Activated CD4-positive, alpha-beta T cell treated with anti-CD3 and anti-CD28 coated beads for 36 hours (primary cell): ENCODE measurements at regions of chr6 and their contacts with region 1.

Region 1: DNA sequence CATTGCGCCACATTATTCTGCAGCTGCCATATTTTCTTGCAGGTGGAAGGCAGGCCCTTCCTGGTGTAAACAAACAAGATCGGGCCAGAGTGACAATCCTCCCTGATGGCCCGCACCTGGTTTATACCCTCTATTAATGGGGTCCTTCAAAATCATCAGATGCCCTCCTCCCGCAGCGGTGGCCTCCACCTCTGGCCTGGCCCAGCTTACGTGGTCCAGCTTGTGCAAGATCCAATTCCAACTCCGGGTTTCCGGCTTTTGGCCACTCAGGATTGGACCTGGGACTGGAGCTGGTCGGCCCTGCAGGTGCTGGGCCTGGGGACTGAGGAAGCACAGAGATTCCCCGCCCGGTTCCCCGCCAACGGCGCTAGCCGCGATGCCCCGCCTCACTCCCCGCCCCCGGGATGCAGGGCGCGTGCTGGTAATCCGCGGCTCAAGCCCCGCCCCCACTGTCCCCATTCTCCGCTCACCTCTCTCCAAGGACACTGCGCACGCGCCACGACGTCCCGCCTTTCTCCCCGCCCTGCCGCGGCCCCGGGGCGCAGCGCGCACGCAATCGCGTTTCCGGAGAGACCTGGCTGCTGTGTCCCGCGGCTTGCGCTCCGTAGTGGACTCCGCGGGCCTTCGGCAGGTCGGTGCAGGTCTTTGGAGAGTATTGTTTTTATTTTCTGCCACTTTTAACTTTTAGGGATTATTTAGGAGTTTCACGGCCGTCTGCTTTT is at the start of gene TMEM14B:
- DNase-seq: peak; percentile 100
- ATAC-seq: peak; percentile 98
- H3K4me3 Mint-ChIP-seq: peak within 1 kb of the TSS; percentile 95
- H3K27ac Mint-ChIP-seq: peak within 1 kb of the TSS; percentile 95
- H3K4me1 Mint-ChIP-seq: peaks cover 40% of the 10 kb centered on the region
- H3K27me3 Mint-ChIP-seq: no peaks in the 10 kb centered on the region
- total RNA-seq, gene TMEM14B: 77.2 to 99.3 TPM

Region 2: GRCh38 chr6:10404107-10404798 is 343.2 kb before region 1 on chr6:
- CTCF ChIA-PET with region 1: no interaction called
- POLR2A ChIA-PET with region 1: no interaction called
- intact Hi-C with region 1: loop called (anchors 1 to 2 kb)
- DNase-seq: peak; percentile 95
- ATAC-seq: peak; percentile 95
- H3K4me3 Mint-ChIP-seq: peak overlapping the region; percentile 71
- H3K27ac Mint-ChIP-seq: peak overlapping the region; percentile 84
- H3K4me1 Mint-ChIP-seq: peaks cover 7% of the 10 kb centered on the region
- H3K27me3 Mint-ChIP-seq: peaks cover 60% of the 10 kb centered on the region

Region 3: GRCh38 chr6:10510592-10511367 is 236.6 kb before region 1 on chr6:
- CTCF ChIA-PET with region 1: interaction called, 3 read pairs
- POLR2A ChIA-PET with region 1: no interaction called
- intact Hi-C with region 1: loop called in 1 of 2 experiments (anchors 2 kb)
- DNase-seq: peak; percentile 73
- ATAC-seq: peak; percentile 99
- H3K4me3 Mint-ChIP-seq: no peak overlapping the region
- H3K27ac Mint-ChIP-seq: no peak overlapping the region
- H3K4me1 Mint-ChIP-seq: peaks cover 5% of the 10 kb centered on the region
- H3K27me3 Mint-ChIP-seq: peaks cover 2% of the 10 kb centered on the region

Region 4: GRCh38 chr6:10528170-10528981 is 219.0 kb before region 1 on chr6:
- CTCF ChIA-PET with region 1: interaction called, 3 read pairs
- POLR2A ChIA-PET with region 1: no interaction called
- intact Hi-C with region 1: loop called in 1 of 2 experiments (anchors 1 kb)
- DNase-seq: peak; percentile 48
- ATAC-seq: peak; percentile 85
- H3K4me3 Mint-ChIP-seq: peak overlapping the region; percentile 76
- H3K27ac Mint-ChIP-seq: peak overlapping the region; percentile 86
- H3K4me1 Mint-ChIP-seq: peaks cover 58% of the 10 kb centered on the region
- H3K27me3 Mint-ChIP-seq: peaks cover 3% of the 10 kb centered on the region

Region 5: GRCh38 chr6:10722820-10723566 is 24.4 kb before region 1 on chr6 and contains the start of gene TMEM14C:
- CTCF ChIA-PET with region 1: interaction called, 9 read pairs
- POLR2A ChIA-PET with region 1: interaction called, 19 read pairs
- intact Hi-C with region 1: loop called (anchors 1 kb)
- DNase-seq: peak; percentile 94
- ATAC-seq: peak; percentile 95
- H3K4me3 Mint-ChIP-seq: peak within 1 kb of the TSS; percentile 92
- H3K27ac Mint-ChIP-seq: peak within 1 kb of the TSS; percentile 93
- H3K4me1 Mint-ChIP-seq: peaks cover 49% of the 10 kb centered on the region
- H3K27me3 Mint-ChIP-seq: no peaks in the 10 kb centered on the region
- total RNA-seq, gene TMEM14C: 67.6 to 81.7 TPM

Region 6: DNA sequence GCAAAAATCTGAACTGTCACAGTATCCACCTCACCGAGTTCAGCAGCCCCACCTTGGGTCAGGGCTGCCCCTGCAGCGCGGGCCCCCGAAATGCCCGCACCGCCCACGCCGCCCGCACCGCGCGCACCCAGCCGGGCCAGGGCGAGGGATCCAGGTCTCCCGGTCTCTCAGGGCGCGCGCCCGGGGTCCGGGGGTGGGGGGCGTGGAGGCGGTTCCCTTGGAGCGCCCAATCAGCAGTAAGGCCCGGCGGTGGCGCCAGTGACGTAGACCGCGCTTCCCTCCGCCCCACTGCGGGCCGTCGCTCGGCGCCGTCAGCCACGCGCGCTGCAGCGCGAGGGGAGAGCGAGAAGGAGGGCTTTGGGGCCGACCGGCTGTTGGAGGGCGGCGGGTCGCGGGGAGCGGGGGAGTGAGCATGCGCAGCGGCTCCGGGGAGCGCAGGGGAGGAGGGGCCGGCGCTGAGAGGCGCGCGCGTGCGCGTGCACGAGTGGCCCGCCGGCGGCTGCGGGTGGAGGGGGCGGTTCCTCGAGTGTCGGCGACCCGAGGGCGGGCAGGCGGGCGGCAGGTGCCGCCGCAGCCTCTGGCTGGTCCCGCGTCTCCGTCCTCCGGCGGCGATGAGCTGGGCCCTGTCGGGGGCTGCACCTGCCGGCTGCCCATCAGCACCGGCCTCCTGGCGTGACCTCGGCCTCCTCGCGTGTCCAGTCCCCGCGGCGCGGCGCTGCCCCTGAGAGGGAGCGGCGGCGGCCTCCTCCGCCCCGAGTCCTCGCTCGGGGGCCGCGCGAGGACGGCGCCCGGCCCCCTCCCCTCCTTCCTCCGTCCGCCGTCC is 790.0 kb after region 1 on chr6 and contains the start of gene TMEM170B:
- CTCF ChIA-PET with region 1: no interaction called
- POLR2A ChIA-PET with region 1: no interaction called
- intact Hi-C with region 1: loop called in 1 of 2 experiments (anchors 1 kb)
- DNase-seq: peak; percentile 95
- ATAC-seq: peak; percentile 96
- H3K4me3 Mint-ChIP-seq: peak within 1 kb of the TSS; percentile 76
- H3K27ac Mint-ChIP-seq: no peak within 1 kb of the TSS
- H3K4me1 Mint-ChIP-seq: peaks cover 5% of the 10 kb centered on the region
- H3K27me3 Mint-ChIP-seq: peaks cover 8% of the 10 kb centered on the region
- total RNA-seq, gene TMEM170B: 0.98 to 1.3 TPM